Right cardiac atrium (tissue), 5 donors: ENCODE measurements at regions of chr9 and their contacts with region 1.

Region 1: GRCh38 chr9:5450359-5451091 is at the start of gene CD274:
- DNase-seq: peak; percentile 92 to 97 (median 96)
- ATAC-seq: peak; percentile 99
- H3K4me3 ChIP-seq: peak within 1 kb of the TSS; percentile 96
- H3K27ac ChIP-seq: peak within 1 kb of the TSS; percentile 85
- H3K4me1 ChIP-seq: peaks cover 4% of the 10 kb centered on the region
- H3K27me3 ChIP-seq: no peaks in the 10 kb centered on the region
- total RNA-seq, gene CD274: 8.8 to 12.0 (median 10.9) TPM

Region 2: DNA sequence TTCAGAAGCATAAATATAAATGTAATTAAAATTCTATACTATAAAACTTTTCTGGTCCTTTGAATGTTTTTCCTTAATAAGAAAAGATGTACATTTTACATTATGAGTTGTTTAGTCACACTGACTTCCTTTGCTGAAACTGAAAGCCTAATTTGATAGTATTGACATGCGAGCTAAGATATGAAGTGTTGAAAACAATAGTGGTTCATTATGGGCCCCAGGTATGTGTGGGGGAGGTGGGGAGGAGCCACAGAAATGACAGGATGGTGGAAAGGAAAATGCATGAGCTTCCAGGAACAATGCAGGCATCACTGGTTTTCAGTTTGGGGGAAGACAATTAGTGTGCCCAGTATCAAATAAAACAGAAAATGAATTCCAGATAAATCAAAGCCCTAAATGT is 75.4 kb before region 1 on chr9:
- intact Hi-C with region 1: no loop called
- DNase-seq: no peak
- ATAC-seq: no peak
- H3K4me3 ChIP-seq: no peak overlapping the region
- H3K27ac ChIP-seq: no peak overlapping the region
- H3K4me1 ChIP-seq: no peaks in the 10 kb centered on the region
- H3K27me3 ChIP-seq: no peaks in the 10 kb centered on the region

Region 3: GRCh38 chr9:5499889-5500398 is 49.4 kb after region 1 on chr9:
- intact Hi-C with region 1: loop called in 2 of 4 experiments (anchors 5 to 10 kb)
- DNase-seq: peak in 2 of 3 donors; percentile 43 to 53
- ATAC-seq: peak; percentile 67 to 90
- H3K4me3 ChIP-seq: no peak overlapping the region
- H3K27ac ChIP-seq: peak overlapping the region; percentile 97
- H3K4me1 ChIP-seq: peaks cover 19% of the 10 kb centered on the region
- H3K27me3 ChIP-seq: no peaks in the 10 kb centered on the region

Region 4: GRCh38 chr9:5529683-5530221 is 79.2 kb after region 1 on chr9:
- intact Hi-C with region 1: no loop called
- DNase-seq: no peak
- ATAC-seq: no peak
- H3K4me3 ChIP-seq: no peak overlapping the region
- H3K27ac ChIP-seq: no peak overlapping the region
- H3K4me1 ChIP-seq: no peaks in the 10 kb centered on the region
- H3K27me3 ChIP-seq: no peaks in the 10 kb centered on the region

Region 5: GRCh38 chr9:5633243-5633642 is 182.7 kb after region 1 on chr9:
- intact Hi-C with region 1: no loop called
- DNase-seq: no peak
- ATAC-seq: no peak
- H3K4me3 ChIP-seq: no peak overlapping the region
- H3K27ac ChIP-seq: no peak overlapping the region
- H3K4me1 ChIP-seq: no peaks in the 10 kb centered on the region
- H3K27me3 ChIP-seq: no peaks in the 10 kb centered on the region